Activated naive CD4-positive, alpha-beta T cell treated with anti-CD3 and anti-CD28 coated beads for 36 hours (primary cell): ENCODE measurements at regions of chr1 and their contacts with region 1.

Region 1: DNA sequence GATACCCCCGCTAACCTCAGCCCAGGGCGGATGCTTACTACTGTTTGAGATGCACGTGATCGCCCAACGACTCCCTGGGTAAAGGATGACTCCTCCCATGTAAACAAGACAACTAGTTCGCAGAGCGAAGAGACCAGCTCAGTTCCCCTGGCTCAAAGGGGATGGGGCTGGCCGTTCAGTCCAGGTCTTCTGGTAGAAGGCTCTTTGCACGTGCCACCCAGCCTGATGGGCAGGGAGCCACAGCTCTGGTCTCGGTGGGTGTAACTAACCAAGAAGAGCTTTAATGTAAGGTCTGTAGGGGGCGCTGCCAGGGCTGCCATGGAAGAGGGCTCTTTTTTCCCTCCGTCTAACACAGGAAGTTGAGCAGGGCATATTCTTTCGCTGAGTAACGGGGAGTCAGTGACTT is 49.4 kb upstream of the PARP1 start:
- DNase-seq: peak; percentile 79
- H3K4me3 Mint-ChIP-seq: peak overlapping the region; percentile 43
- H3K27ac Mint-ChIP-seq: no peak overlapping the region
- H3K4me1 Mint-ChIP-seq: peaks cover 14% of the 10 kb centered on the region
- H3K27me3 Mint-ChIP-seq: no peaks in the 10 kb centered on the region

Region 2: DNA sequence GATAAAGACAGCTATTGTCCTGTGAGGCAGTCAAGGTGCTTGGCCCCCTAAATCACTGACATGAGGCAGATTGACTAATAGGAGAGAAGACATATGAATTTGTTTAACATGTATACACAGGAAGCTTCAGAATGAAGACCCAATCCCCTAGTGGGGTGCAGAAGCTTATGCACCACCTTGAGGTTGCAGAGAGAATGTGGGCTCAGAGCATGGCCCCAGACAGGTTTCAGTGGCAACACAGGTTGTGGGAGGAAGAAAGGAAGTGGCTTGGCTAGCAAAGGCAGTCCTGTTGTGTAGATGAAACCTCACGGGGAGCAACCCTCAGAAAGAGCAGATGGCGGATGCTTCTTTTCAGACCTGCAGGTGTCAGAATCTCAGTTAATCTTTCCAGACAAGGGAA is 12.4 kb before region 1 on chr1:
- CTCF ChIA-PET with region 1: interaction called, 8 read pairs
- intact Hi-C with region 1: loop called (anchors 1 kb)
- DNase-seq: peak; percentile 80
- H3K4me3 Mint-ChIP-seq: no peak overlapping the region
- H3K27ac Mint-ChIP-seq: peak overlapping the region; percentile 47
- H3K4me1 Mint-ChIP-seq: peaks cover 31% of the 10 kb centered on the region
- H3K27me3 Mint-ChIP-seq: no peaks in the 10 kb centered on the region

Region 3: GRCh38 chr1:226519716-226520598 is 62.6 kb after region 1 on chr1:
- CTCF ChIA-PET with region 1: no interaction called
- intact Hi-C with region 1: no loop called
- DNase-seq: no peak
- H3K4me3 Mint-ChIP-seq: no peak overlapping the region
- H3K27ac Mint-ChIP-seq: no peak overlapping the region
- H3K4me1 Mint-ChIP-seq: no peaks in the 10 kb centered on the region
- H3K27me3 Mint-ChIP-seq: no peaks in the 10 kb centered on the region

Region 4: GRCh38 chr1:226547754-226548191 is 90.5 kb after region 1 on chr1:
- CTCF ChIA-PET with region 1: no interaction called
- intact Hi-C with region 1: loop called (anchors 1 kb)
- DNase-seq: peak; percentile 82
- H3K4me3 Mint-ChIP-seq: no peak overlapping the region
- H3K27ac Mint-ChIP-seq: no peak overlapping the region
- H3K4me1 Mint-ChIP-seq: peaks cover 10% of the 10 kb centered on the region
- H3K27me3 Mint-ChIP-seq: peaks cover 33% of the 10 kb centered on the region

Region 5: GRCh38 chr1:226608699-226609505 is 151.6 kb after region 1 on chr1:
- CTCF ChIA-PET with region 1: interaction called, 3 read pairs
- intact Hi-C with region 1: loop called (anchors 10 kb)
- DNase-seq: peak; percentile 79
- H3K4me3 Mint-ChIP-seq: no peak overlapping the region
- H3K27ac Mint-ChIP-seq: no peak overlapping the region
- H3K4me1 Mint-ChIP-seq: no peaks in the 10 kb centered on the region
- H3K27me3 Mint-ChIP-seq: no peaks in the 10 kb centered on the region